Astrocyte of the cerebellum (primary cell): ENCODE measurements at regions of chr16 and their contacts with region 1.

Region 1: DNA sequence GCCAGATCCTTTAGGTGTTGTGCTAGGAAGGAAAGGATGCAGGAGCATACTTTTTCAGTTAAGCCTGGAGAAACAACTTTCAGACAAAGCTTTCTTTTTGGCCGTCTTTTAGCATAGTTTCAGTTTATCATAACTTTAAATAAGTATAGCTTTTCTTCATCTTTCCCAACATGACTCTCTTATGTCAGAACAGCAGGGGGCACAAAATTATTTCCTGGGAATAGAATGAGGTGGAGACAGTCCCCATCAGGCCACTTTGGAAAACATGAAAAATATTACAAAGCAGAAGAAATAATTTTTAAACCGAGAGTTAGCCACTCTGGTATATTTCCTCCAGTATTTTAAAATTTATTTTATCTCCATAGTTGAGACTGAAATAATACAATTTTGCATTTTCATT is 387.6 kb downstream of the HAPSTR1 start:
- DNase-seq: no peak
- H3K4me3 ChIP-seq: no peak overlapping the region
- CTCF ChIP-seq: no peak

Region 2: DNA sequence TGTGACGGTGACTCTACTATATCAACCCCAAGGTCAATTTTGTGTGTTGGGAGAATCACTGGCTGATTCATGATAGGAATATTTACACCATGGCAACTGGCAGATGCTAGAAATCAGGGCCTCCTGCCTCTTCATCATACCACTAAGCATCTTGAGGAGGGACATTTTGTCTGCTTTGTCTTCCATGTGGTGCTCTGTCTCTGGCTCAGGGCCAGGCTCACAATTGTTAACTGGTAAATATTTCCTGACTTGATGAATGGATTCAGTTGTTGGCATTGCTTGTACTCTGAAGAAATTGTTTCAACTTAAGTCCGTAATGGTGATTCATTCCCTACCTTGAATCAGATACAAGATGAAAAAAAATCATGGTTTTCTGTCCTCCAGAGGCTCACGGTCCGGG is 94.9 kb before region 1 on chr16:
- in situ Hi-C with region 1: loop called (anchors 5 kb)
- DNase-seq: no peak
- H3K4me3 ChIP-seq: no peak overlapping the region
- CTCF ChIP-seq: no peak

Region 3: GRCh38 chr16:9567666-9568065 is 88.7 kb after region 1 on chr16:
- in situ Hi-C with region 1: no loop called
- DNase-seq: no peak
- H3K4me3 ChIP-seq: no peak overlapping the region
- CTCF ChIP-seq: no peak